Body of pancreas (tissue), 4 donors: ENCODE measurements at regions of chr17 and their contacts with region 1.

Region 1: DNA sequence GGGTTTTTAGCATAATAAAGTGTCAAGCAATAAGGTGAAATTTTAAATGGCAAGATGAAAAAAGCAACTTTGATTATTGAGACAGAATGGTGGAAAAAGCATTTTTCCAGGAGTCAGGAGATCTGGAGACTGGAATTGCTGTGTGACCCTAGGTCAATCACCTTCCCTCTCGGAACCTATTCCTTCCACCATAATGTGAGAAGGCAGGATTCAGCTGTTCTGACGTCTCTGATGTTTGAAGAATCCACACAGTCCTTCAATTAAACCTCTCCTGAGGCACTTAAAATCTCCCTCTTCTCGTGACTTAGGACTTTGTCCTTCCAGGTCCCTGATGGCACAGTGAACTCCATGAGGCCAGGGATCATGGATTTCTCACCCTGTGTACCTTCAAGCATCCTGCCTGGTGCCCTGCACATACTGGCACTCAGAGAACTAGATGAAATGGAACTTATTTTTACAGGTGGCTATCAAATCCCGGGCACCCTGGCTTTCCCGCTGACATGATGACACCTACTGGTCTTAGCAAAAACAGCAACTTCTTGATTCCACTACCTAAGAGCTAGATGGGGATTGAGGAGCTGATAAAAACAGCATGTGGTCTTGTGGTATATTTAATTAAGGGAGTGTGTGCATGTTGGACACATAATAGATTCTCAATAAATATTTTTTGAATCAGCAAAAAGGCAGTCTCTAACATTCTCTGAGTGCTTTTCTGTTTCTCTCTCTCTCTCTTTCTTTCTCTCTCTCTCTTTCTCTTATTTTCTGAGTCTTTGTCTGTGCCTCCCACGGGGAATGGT is 2.3 kb upstream of the CCDC182 start:
- DNase-seq: peak; percentile 35 to 56 (median 56)
- ATAC-seq: peak; percentile 73
- H3K4me3 ChIP-seq: no peak overlapping the region
- H3K27ac ChIP-seq: no peak overlapping the region
- H3K4me1 ChIP-seq: peaks cover 10% of the 10 kb centered on the region
- H3K27me3 ChIP-seq: no peaks in the 10 kb centered on the region
- CTCF ChIP-seq: peak in 6 of 7 experiments; percentile 54 to 72 (median 66)
- POLR2A ChIP-seq: no peak

Region 2: DNA sequence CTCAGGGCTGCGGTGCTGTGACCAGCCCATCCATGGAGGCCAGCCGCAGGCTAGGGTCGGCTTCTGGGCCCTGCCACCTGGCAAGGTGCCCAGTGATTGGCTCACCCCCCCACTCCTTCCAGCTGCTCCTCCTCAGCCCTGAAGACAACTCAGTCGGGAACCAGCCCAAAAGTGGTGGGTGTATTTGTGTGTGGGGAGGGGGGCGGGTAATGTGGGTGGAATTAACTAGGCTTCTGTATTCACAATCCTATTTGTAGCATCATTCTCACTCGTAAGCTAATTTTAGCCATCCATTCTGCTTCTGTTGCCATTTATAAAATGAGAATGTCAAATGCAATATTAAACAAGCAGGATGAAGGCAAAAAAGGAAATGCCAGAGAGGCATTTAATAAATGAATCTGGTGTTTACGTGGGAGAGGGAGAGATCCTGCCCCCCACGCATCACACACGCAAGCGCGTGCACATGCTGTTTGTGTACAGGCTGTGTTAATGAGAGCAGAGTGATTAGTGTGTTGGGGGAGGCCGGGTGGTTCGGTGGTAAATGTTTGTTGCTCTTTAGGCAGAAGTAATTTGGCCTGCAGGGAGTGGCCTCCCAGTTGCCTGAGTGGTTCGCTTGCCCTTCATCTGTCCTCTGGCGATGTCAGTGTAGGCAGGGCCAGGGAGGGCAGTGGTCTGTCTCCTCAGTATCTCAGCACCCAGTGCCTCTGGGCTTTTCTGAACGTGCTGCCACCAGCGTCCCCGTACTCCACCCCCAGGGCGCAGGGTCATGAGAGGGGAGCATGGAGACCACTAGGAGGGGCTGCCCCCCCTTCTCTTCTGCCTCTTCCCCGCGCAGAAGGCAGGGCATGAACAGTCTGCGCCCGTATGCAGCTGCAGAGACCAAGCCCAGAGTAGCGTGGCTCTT is 142.4 kb before region 1 on chr17:
- intact Hi-C with region 1: loop called (anchors 10 kb)
- DNase-seq: peak in 2 of 4 donors; percentile 20 to 55
- ATAC-seq: no peak
- H3K4me3 ChIP-seq: no peak overlapping the region
- H3K27ac ChIP-seq: peak overlapping the region in 3 of 4 donors; percentile 55 to 63 (median 62)
- H3K4me1 ChIP-seq: peaks cover 62% of the 10 kb centered on the region
- H3K27me3 ChIP-seq: no peaks in the 10 kb centered on the region
- CTCF ChIP-seq: no peak
- POLR2A ChIP-seq: no peak